CD8-positive, alpha-beta T cell (primary cell): ENCODE measurements at regions of chr2 and their contacts with region 1.

Region 1: DNA sequence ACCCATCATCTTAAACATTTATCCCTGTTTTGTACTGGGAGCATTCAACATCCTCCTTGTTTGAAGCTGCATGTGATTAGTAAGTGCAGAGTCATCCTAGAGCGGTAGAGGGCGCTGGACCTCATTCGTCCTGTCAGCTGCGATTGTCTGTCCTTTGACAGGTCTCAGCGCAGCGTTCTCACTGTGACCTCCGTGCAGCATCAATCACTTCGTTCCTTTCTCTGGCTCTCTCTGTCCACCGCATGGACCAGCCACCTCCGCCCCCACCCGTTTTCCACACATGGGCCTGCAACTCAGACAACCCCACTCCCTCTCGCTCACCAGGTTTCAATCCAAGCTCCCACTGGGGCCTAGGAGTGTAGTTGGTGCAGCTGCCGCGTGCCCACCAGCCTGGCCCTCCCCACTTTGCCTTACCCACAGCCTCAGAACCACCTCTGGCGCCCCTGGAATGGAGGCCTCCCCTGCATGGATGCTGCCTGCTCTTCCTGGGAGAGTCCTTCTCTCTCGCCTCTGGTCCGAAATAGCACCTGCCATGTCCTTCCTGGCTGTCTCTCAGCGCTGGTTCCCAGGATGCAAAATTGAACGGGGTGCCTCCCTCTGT is 90.5 kb downstream of the NDUFA10 start:
- DNase-seq: peak; percentile 31 to 73 (median 59)
- ATAC-seq: peak; percentile 80
- H3K4me3 ChIP-seq: no peak overlapping the region
- H3K4me3 Mint-ChIP-seq: no peak overlapping the region
- H3K27ac ChIP-seq: no peak overlapping the region
- H3K27ac Mint-ChIP-seq: no peak overlapping the region
- H3K4me1 ChIP-seq: no peaks in the 10 kb centered on the region
- H3K4me1 Mint-ChIP-seq: peaks cover 5% of the 10 kb centered on the region
- H3K27me3 ChIP-seq: no peaks in the 10 kb centered on the region
- H3K27me3 Mint-ChIP-seq: peaks cover 7% of the 10 kb centered on the region
- CTCF ChIP-seq: peak; percentile 76

Region 2: DNA sequence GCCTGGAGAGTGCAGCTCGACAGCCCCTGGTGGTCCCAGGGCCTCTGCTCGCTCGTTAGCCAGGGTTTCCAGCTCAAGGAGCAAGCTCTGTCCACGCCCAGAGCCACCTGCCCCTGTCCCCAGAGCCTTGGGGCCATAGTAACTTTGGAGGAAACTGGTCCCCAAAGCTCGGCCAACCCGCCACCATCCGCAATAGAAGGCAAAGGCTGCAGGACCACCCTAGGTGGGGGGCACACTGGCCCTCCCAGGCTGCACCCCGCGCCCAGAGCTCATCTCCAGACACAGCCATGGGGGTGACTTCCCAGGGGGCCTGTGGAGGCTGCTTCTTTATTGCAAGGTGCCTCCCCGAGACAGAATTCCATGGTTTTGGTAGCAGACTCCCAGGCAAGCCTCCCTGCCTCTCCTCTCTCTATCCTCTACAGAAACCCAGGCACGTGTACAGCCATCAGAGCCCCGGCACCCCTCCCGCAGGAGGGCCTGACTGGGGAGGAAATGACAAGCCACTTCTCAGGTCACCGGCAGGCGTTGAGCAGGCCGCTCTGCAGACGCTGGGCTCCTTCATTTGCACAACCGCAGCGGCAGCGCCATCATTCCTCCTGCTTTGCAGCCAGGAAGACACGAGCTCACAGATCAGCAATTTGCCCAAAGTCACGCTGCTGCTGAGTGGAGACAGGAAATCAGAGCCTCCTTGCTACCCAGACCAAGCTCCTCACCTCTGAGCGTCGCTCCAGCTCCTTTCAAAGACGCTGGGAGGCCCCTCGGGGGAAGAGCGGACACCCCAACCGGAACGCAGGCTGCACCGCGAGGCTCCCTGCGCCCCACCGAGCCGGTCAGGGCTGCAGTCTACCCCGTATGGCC is 10.3 kb after region 1 on chr2:
- CTCF ChIA-PET with region 1: interaction called, 10 read pairs
- POLR2A ChIA-PET with region 1: no interaction called
- intact Hi-C with region 1: no loop called
- DNase-seq: peak; percentile 8 to 58 (median 29)
- ATAC-seq: peak; percentile 57
- H3K4me3 ChIP-seq: peak overlapping the region in 1 of 2 experiments; percentile 27
- H3K4me3 Mint-ChIP-seq: peak overlapping the region; percentile 75
- H3K27ac ChIP-seq: no peak overlapping the region
- H3K27ac Mint-ChIP-seq: peak overlapping the region; percentile 76
- H3K4me1 ChIP-seq: peaks cover 13% of the 10 kb centered on the region
- H3K4me1 Mint-ChIP-seq: peaks cover 8% of the 10 kb centered on the region
- H3K27me3 ChIP-seq: no peaks in the 10 kb centered on the region
- H3K27me3 Mint-ChIP-seq: no peaks in the 10 kb centered on the region
- CTCF ChIP-seq: no peak

Region 3: DNA sequence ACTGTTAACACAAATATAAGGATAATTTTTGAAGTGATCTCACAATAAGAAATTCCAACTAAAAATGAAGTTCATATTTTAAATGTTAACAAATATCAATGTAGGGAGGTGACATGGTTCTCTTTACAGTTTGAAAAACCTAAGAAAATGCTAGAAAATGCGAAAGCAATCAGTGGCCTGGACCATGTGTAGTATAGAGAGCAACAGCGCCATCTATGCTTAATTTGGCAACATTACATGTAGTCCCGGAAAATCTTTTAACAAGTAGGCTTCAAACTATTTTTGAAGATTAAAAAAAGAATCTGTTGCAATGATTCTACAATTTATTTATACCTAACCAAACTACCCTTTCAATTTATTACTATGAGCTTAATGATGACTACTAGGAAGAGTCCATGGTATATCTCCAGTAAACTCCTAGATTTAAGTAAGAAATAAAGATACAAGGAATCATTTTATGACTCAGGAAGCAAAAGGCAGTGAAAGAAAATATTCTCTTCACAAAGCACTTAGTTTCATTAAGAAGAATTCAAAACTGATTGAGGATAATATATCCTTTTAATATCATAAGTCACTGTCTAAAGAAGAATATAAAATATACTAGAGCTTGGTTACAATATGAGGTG is 57.1 kb after region 1 on chr2:
- CTCF ChIA-PET with region 1: interaction called, 4 read pairs
- POLR2A ChIA-PET with region 1: no interaction called
- intact Hi-C with region 1: loop called in 1 of 2 experiments (anchors 1 kb)
- DNase-seq: peak in 2 of 9 experiments; percentile 54 to 65
- ATAC-seq: peak; percentile 69
- H3K4me3 ChIP-seq: no peak overlapping the region
- H3K4me3 Mint-ChIP-seq: no peak overlapping the region
- H3K27ac ChIP-seq: no peak overlapping the region
- H3K27ac Mint-ChIP-seq: no peak overlapping the region
- H3K4me1 ChIP-seq: no peaks in the 10 kb centered on the region
- H3K4me1 Mint-ChIP-seq: no peaks in the 10 kb centered on the region
- H3K27me3 ChIP-seq: no peaks in the 10 kb centered on the region
- H3K27me3 Mint-ChIP-seq: no peaks in the 10 kb centered on the region
- CTCF ChIP-seq: peak; percentile 99